ENCODE measurements at regions of chr11 and their contacts with region 1.

Region 1: GRCh38 chr11:65477149-65477965 is 21.5 kb upstream of the MALAT1 start:
- DNase-seq: peak; percentile 88
- ATAC-seq: peak; percentile 85
- H3K4me3 ChIP-seq: peak overlapping the region; percentile 75 to 90 (median 82)
- H3K27ac ChIP-seq: peak overlapping the region; percentile 95
- H3K4me1 ChIP-seq: peaks cover 62% of the 10 kb centered on the region
- H3K27me3 ChIP-seq: no peaks in the 10 kb centered on the region; a peak in 1 of 5 replicates
- CTCF ChIP-seq: no peak
- EP300 ChIP-seq: peak; percentile 59; a peak in 3 of 4 replicates
- POLR2A ChIP-seq: peak; percentile 72 to 86
- RAD21 ChIP-seq: peak; percentile 49; the same call in 1 of the 2 replicates

Region 2: DNA sequence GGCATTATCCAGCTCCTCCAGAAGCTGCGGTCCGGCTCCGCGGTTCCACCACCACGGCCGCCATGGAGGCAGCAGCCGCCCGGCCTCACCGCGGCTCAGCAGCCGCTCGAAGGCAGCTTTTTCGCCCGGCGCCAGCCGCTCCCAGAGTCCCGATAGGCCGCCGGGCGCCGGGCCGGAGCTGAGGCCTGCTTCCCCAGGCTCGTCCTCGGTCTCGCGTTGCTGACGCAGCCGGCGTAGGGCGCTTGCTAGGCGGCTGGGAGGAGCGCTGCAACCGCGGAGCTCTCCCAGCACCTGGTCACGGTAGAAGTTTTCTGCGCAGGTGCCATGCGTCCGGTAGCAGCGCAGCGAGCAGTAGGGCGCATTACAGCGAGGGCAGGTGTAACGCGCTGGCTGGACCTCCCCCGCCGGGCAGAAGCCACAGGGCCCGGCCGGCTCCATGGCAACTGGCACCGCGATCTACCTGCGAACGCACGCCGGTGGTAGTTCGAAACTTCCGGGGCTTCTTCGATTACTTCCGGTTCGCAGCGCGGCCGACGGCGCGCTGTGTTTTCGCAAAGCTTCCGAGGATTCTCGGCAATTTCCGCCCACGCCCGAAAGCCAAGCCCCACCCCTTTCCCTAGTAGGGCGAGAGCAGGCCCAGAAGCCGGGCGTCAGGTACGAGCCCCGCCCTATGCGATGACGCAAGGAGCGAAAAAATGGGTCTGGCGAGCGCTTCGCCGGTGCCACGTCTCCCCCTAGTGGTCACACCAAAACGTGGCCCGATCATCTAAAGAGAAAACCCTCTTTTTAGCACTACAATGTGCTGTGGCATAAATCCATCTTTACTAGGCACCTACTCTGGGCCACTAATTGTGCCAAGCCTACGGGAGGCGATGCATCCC is 359.9 kb before region 1 on chr11 and contains the start of gene ZNHIT2:
- CTCF ChIA-PET with region 1: no interaction called
- POLR2A ChIA-PET with region 1: no interaction called
- in situ Hi-C with region 1: no loop called
- intact Hi-C with region 1: no loop called
- DNase-seq: peak; percentile 96
- ATAC-seq: peak; percentile 59
- H3K4me3 ChIP-seq: peak within 1 kb of the TSS; percentile 73 to 88 (median 80)
- H3K27ac ChIP-seq: peak within 1 kb of the TSS; percentile 75
- H3K4me1 ChIP-seq: peaks cover 42% of the 10 kb centered on the region
- H3K27me3 ChIP-seq: no peaks in the 10 kb centered on the region; a peak in 1 of 5 replicates
- CTCF ChIP-seq: peak; percentile 97
- EP300 ChIP-seq: 0 out of 4 replicates have a peak, but pooled peaks of 1 of the 2 experiments have one; percentile 16
- POLR2A ChIP-seq: peak in 1 of 2 experiments; percentile 87; a peak in 2 of 4 replicates
- RAD21 ChIP-seq: peak; percentile 85
- total RNA-seq, gene ZNHIT2: 5.7 and 6.5 TPM in 2 replicates

Region 3: DNA sequence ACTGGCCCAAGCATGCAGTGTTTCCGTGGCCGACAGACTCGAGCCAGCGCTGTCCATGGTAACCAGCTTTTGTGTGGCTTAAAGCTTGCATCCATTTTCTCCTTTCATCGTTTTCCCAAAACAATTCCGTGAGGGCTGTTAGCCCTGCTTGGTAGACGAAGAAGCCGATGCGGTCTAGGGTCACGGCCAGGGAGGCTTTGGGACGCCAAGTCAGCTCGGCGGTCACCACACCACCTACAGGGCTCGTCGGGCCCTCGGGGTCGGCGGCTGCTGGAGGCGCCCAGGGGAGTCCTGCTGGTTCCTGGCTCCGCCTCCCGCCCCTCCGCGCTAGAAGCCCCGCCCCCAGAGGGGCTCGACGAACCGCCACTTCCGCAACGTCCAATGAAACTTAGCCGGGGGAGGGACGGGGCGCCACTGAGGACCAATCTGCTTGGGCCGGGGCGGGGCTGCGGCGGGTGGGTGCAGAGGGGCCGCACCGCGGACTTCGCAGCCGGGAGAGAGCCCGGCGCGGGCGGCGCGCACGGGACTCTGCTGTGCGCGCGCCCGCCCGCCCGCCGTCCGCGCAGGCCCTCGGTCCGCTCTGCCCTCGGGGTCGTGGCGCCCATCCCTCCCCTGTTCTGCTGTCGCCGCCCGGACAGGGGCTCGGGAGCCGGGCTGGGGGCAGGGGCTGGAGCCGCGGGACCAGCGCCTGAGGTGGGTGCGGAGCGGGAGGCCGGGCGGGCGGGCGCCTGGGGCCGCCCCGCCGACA is 122.9 kb before region 1 on chr11 and contains the start of gene TIGD3:
- CTCF ChIA-PET with region 1: no interaction called
- POLR2A ChIA-PET with region 1: interaction called, 21 read pairs
- in situ Hi-C with region 1: no loop called
- intact Hi-C with region 1: no loop called
- DNase-seq: peak; percentile 92
- ATAC-seq: peak; percentile 79
- H3K4me3 ChIP-seq: peak within 1 kb of the TSS; percentile 70 to 82 (median 77)
- H3K27ac ChIP-seq: peak within 1 kb of the TSS; percentile 64
- H3K4me1 ChIP-seq: peaks cover 42% of the 10 kb centered on the region
- H3K27me3 ChIP-seq: no peaks in the 10 kb centered on the region
- CTCF ChIP-seq: peak; percentile 33
- EP300 ChIP-seq: no peak
- POLR2A ChIP-seq: peak; percentile 45 to 92
- RAD21 ChIP-seq: 0 out of 2 replicates have a peak, but pooled peaks have one; percentile 15
- total RNA-seq, gene TIGD3: 4.0 and 4.9 TPM in 2 replicates

Region 4: DNA sequence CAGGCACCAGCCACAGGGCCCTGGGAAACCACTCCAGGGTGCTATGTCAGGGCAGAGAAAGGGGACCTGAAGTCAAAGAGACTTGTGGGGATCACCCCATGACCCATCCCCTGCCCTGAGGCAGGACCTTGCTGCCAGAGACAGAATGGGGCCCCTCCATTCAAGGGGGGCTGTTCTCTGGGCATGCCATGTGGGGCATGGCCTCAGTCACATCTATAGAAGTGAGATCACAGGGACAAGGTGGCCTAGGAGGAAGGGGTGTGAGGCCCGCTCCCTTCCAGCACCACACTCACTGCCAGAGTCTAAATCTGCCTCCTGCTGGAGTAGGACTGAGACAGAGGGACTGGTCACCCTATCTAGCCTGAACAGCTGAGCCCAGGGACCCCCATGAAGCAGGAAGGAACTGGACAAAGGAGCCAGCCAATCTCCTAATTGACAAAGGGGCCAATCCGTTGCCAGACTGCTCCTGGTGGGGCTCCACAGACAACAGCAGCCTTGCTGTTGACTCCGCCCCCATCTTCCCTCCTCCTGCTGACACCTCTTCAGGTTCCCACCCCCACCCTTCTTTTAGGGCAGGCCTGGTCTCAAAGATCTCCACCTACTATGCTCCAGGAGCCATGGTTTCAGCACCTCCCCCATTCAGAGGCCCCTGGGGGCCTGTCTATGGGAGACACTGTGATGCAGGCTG is 28.8 kb before region 1 on chr11:
- CTCF ChIA-PET with region 1: no interaction called
- POLR2A ChIA-PET with region 1: interaction called, 31 read pairs
- in situ Hi-C with region 1: no loop called
- intact Hi-C with region 1: no loop called
- DNase-seq: no peak
- ATAC-seq: peak; percentile 18
- H3K4me3 ChIP-seq: no peak overlapping the region
- H3K27ac ChIP-seq: no peak overlapping the region
- H3K4me1 ChIP-seq: peaks cover 48% of the 10 kb centered on the region
- H3K27me3 ChIP-seq: no peaks in the 10 kb centered on the region
- CTCF ChIP-seq: no peak
- EP300 ChIP-seq: no peak
- POLR2A ChIP-seq: peak in 1 of 2 experiments; percentile 50; a peak in 1 of 4 replicates
- RAD21 ChIP-seq: no peak

Region 5: DNA sequence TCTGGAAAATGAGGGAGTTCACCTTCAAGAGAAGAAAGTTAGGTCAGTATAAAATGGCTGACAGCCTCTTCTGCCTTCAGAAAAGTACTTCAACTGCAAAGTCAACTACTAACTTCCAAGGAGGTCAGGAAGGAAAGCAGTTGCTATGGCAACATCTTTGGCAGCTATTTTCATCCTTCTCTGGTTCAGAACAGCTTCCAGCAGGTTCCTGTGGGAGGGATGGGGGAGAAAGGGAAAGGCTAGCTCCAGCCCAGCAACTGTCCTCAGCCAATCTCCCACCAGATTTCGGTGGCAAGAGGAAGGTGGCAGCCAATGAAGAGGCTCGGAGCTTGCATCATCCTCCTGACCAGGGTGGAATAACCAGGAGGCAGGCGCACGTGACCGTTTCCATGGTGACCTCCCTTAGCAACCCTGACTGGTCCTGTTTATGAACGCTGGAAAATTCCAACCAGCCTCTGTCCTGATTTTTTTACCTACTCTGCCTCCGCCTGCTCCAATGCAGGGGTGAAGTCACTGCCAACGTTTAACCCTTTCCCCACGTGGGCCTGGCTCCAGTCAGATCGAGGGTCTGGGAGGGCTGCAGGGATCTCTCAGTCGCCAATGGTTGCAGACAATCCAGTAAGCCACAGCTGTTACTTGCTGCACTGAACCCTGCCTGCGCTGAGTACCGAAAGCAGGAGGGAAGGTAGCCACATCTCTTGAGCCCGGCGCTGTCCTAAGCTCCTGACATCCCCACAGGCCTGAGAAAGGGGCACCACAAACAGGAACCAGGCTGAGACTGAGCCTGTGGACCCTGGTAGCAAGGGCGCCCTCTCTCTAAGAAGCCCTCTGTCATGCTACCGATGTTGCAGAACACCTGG is 10.3 kb after region 1 on chr11:
- CTCF ChIA-PET with region 1: no interaction called
- POLR2A ChIA-PET with region 1: interaction called, 1,590 read pairs
- in situ Hi-C with region 1: no loop called
- intact Hi-C with region 1: loop called (anchors 1 kb)
- DNase-seq: peak; percentile 99
- ATAC-seq: peak; percentile 64
- H3K4me3 ChIP-seq: peak overlapping the region; percentile 41 to 72 (median 56)
- H3K27ac ChIP-seq: peak overlapping the region; percentile 88
- H3K4me1 ChIP-seq: peaks cover 83% of the 10 kb centered on the region
- H3K27me3 ChIP-seq: no peaks in the 10 kb centered on the region
- CTCF ChIP-seq: peak; percentile 49; the same call in 1 of the 2 replicates
- EP300 ChIP-seq: peak in 1 of 2 experiments; percentile 87; a peak in 2 of 4 replicates
- POLR2A ChIP-seq: peak; percentile 25 to 70; a peak in 2 of 4 replicates
- RAD21 ChIP-seq: peak; percentile 32; the same call in 1 of the 2 replicates

Region 6: GRCh38 chr11:65530157-65530496 is 52.8 kb after region 1 on chr11:
- CTCF ChIA-PET with region 1: no interaction called
- POLR2A ChIA-PET with region 1: interaction called, 12 read pairs
- in situ Hi-C with region 1: no loop called
- intact Hi-C with region 1: no loop called
- DNase-seq: no peak
- ATAC-seq: peak; percentile 62
- H3K4me3 ChIP-seq: no peak overlapping the region
- H3K27ac ChIP-seq: peak overlapping the region; percentile 66
- H3K4me1 ChIP-seq: peaks cover 47% of the 10 kb centered on the region
- H3K27me3 ChIP-seq: no peaks in the 10 kb centered on the region; a peak in 1 of 5 replicates
- CTCF ChIP-seq: no peak
- EP300 ChIP-seq: no peak
- POLR2A ChIP-seq: no peak
- RAD21 ChIP-seq: no peak

Region 7: DNA sequence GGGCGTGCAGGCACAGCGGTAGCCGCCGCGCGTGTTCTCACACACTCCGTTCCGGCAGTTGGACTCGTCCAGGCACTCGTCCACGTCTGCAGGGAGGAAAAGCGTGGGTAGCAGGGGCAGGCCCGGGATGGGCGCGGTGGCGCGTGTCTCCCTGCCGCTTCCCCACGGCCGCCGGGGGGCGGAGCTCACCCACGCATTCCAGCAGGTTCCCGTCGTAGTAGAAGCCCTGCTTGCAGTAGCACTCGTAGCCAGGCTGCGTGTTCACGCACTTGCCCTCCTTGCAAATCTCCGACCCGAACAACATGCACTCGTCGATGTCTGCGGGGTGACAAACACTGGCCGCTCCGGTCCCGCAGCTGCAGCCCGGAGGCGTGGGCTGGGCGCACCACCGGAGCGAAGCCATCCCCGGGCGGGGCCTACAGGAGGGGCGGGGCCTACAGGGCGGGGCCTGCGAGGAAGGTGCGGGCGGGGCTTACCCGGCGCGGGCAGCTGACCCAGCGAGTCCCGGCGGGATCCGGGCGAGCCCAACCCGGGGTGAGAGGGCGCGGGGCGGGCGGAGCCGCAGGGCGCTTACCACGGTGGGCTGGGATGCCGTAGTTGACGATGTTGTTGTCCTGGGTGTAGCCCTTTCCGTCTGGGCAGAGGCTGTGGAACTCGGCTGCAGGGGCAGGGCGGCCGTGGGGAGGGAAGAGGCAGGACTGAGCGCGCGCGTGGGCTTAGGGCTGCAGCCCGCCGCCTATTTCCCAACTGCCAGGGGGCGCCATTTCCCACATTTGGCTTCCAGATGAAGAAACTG is 63.1 kb after region 1 on chr11:
- CTCF ChIA-PET with region 1: no interaction called
- POLR2A ChIA-PET with region 1: no interaction called
- in situ Hi-C with region 1: no loop called
- intact Hi-C with region 1: no loop called
- DNase-seq: no peak
- ATAC-seq: peak; percentile 56
- H3K4me3 ChIP-seq: no peak overlapping the region
- H3K27ac ChIP-seq: no peak overlapping the region
- H3K4me1 ChIP-seq: peaks cover 6% of the 10 kb centered on the region
- H3K27me3 ChIP-seq: no peaks in the 10 kb centered on the region
- CTCF ChIP-seq: peak; percentile 90
- EP300 ChIP-seq: no peak
- POLR2A ChIP-seq: no peak
- RAD21 ChIP-seq: peak; percentile 93